ENCODE measurements at regions of chr5 and their contacts with region 1.

Region 1: GRCh38 chr5:72996632-72997031 is 40.8 kb downstream of the FCHO2 start:
- DNase-seq: no peak
- H3K4me3 ChIP-seq: no peak overlapping the region
- H3K27ac ChIP-seq: no peak overlapping the region
- H3K4me1 ChIP-seq: no peaks in the 10 kb centered on the region
- H3K27me3 ChIP-seq: no peaks in the 10 kb centered on the region
- CTCF ChIP-seq: no peak
- POLR2A ChIP-seq: no peak

Region 2: DNA sequence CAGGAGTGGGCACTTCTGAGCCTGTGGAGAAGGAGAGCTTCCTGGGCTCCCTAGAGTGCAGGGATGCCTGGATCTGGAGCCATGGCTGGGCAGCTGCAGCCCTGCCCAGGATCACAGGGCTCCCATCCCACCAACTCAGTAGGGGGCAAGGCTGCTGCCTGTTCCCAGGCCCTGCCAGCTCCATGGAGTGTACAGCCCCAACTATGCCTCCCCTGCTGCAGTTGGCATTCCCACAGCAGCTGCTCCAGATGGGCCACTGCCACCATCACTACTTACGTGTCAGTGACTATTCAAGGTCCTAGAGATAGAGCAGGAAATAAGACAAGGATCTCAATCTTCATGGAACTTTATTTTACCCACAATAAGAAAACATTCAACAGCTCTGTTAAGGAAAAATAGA is 287.3 kb before region 1 on chr5:
- intact Hi-C with region 1: loop called (anchors 5 kb)
- DNase-seq: no peak
- H3K4me3 ChIP-seq: no peak overlapping the region
- H3K27ac ChIP-seq: no peak overlapping the region
- H3K4me1 ChIP-seq: no peaks in the 10 kb centered on the region
- H3K27me3 ChIP-seq: no peaks in the 10 kb centered on the region
- CTCF ChIP-seq: no peak
- POLR2A ChIP-seq: no peak

Region 3: GRCh38 chr5:73673161-73673591 is 676.5 kb after region 1 on chr5:
- intact Hi-C with region 1: no loop called
- DNase-seq: no peak
- H3K4me3 ChIP-seq: no peak overlapping the region
- H3K27ac ChIP-seq: no peak overlapping the region
- H3K4me1 ChIP-seq: no peaks in the 10 kb centered on the region
- H3K27me3 ChIP-seq: no peaks in the 10 kb centered on the region
- CTCF ChIP-seq: no peak
- POLR2A ChIP-seq: no peak

Region 4: GRCh38 chr5:74167206-74167929 is 1170.7 kb after region 1 on chr5:
- intact Hi-C with region 1: no loop called
- DNase-seq: no peak
- H3K4me3 ChIP-seq: no peak overlapping the region
- H3K27ac ChIP-seq: no peak overlapping the region
- H3K4me1 ChIP-seq: no peaks in the 10 kb centered on the region
- H3K27me3 ChIP-seq: no peaks in the 10 kb centered on the region
- CTCF ChIP-seq: no peak
- POLR2A ChIP-seq: no peak

Measured in breast epithelium (tissue), 4 donors.